CD4-positive, alpha-beta memory T cell (primary cell): ENCODE measurements at regions of chr20 and their contacts with region 1.

Region 1: DNA sequence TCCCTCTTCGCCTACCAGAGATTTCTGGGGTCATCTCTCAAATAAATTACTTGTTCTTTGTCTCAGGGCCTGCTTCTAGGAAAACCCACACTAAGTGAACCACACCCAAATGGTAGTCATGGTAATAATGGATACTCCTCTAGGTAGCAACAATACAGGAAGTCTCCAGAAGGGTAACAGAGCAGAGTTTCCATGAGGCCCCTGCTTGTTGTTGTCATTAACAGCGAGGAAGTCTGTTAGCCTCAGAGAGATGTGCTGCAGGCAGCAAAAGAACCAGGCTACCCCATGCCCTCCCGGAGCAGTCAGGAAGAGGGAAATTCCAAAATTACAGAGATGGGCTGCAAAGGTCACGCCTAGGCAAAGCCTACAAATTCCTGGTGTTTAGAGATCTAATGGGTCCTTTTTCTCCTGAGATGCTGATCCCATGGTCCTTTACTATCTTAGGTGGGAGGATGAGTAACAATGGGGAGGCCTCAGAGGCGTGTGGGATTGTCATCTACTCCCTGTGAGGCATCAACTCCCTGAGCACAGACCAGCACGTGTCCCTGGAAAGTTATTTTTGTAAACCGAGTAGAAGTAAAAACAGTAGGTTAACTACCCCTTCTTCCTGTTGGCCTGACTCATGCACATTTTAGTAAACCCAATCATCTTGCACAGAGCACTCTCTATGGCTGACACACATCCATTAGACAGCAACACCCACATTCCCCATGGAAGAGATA is 10.1 kb downstream of the ISM1 start:
- DNase-seq: peak; percentile 68 to 86 (median 83)
- H3K4me3 ChIP-seq: peak overlapping the region in 1 of 2 donors; percentile 13
- H3K4me3 Mint-ChIP-seq: peak overlapping the region; percentile 32 to 83 (median 68)
- H3K27ac ChIP-seq: peak overlapping the region; percentile 83
- H3K27ac Mint-ChIP-seq: peak overlapping the region; percentile 89 to 99 (median 98)
- H3K4me1 ChIP-seq: peaks cover 44% of the 10 kb centered on the region
- H3K4me1 Mint-ChIP-seq: peaks cover 39 to 48% (median 43%) of the 10 kb centered on the region in 4 donors
- H3K27me3 ChIP-seq: no peaks in the 10 kb centered on the region
- H3K27me3 Mint-ChIP-seq: no peaks in the 10 kb centered on the region

Region 2: DNA sequence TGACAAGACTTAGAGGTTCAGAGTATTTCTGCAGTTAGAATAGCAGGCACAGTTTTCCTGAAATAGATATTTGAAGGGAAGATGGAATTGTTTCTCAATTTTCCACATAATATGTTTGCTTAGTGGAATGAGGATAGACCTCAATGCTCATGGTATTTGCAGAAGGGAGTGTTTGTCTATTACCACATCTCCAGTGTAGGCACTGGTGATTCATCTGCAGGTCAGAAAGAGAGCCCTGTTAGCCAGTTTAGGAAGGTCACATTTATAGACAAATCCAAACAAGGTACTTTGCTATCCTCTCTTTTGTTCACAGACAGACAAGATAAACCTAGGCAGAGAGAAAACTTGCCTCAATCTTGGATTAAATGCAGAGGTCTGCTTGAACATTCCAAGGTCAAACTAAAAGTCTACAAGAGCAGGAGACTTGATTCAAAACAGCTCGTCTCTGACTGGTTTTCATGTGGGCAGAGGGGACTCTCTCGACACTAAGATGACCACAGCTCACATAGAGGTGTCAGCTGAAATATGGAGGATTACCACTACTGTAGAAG is 12.7 kb after region 1 on chr20:
- CTCF ChIA-PET with region 1: interaction called, 9 read pairs
- POLR2A ChIA-PET with region 1: interaction called, 6 read pairs
- intact Hi-C with region 1: loop called (anchors 1 kb)
- DNase-seq: no peak
- H3K4me3 ChIP-seq: no peak overlapping the region
- H3K4me3 Mint-ChIP-seq: no peak overlapping the region
- H3K27ac ChIP-seq: no peak overlapping the region
- H3K27ac Mint-ChIP-seq: no peak overlapping the region
- H3K4me1 ChIP-seq: peaks cover 28% of the 10 kb centered on the region
- H3K4me1 Mint-ChIP-seq: peaks cover 24 to 41% (median 31%) of the 10 kb centered on the region in 4 donors
- H3K27me3 ChIP-seq: no peaks in the 10 kb centered on the region
- H3K27me3 Mint-ChIP-seq: no peaks in the 10 kb centered on the region

Region 3: DNA sequence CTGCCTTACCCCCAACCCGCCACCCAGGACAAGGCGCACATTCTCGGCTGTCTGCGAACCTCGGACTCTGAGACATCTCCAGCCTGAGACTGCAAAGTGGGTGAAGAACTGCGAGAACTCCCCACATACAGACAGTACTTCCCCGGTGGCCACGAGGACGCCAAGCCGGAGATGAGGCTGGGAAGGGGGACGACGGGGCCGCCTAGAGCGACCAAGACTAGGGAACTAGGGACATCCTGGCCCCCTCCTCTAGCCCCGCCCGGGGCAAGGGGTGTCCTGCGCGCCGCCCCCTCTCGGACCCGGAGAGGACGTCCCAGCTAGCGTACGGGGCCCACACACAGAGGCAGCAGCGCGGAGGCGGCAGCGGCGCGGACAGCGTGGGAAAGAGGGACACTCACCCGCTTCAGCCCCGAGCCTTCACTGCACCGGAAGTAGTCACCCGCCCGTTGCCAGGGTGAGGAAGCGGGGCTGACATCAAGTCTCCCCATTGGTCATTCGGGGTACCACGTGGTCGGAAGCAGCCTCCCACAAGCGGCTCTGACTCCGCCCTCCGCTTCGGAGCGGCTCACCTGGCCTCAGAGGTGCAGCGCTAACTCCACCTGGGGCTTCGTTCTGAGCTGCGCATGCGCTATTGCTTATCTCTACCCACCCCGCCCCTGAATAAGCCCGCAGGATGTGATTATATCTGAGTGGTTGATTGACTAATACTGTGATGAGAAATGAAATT is 407.5 kb after region 1 on chr20 and contains the start of gene TASP1:
- CTCF ChIA-PET with region 1: no interaction called
- POLR2A ChIA-PET with region 1: no interaction called
- intact Hi-C with region 1: loop called (anchors 5 kb)
- DNase-seq: peak; percentile 94 to 98 (median 96)
- H3K4me3 ChIP-seq: peak within 1 kb of the TSS; percentile 59 to 90
- H3K4me3 Mint-ChIP-seq: peak within 1 kb of the TSS; percentile 84 to 93 (median 89)
- H3K27ac ChIP-seq: peak within 1 kb of the TSS; percentile 66
- H3K27ac Mint-ChIP-seq: peak within 1 kb of the TSS; percentile 84 to 95 (median 90)
- H3K4me1 ChIP-seq: peaks cover 14% of the 10 kb centered on the region
- H3K4me1 Mint-ChIP-seq: peaks cover 15 to 27% (median 17%) of the 10 kb centered on the region in 4 donors
- H3K27me3 ChIP-seq: no peaks in the 10 kb centered on the region
- H3K27me3 Mint-ChIP-seq: peaks cover 3 to 14% of the 10 kb centered on the region in 2 donors
- total RNA-seq, gene TASP1: 15.1 to 15.2 TPM